ENCODE measurements at regions of chr9 and their contacts with region 1.

Region 1: DNA sequence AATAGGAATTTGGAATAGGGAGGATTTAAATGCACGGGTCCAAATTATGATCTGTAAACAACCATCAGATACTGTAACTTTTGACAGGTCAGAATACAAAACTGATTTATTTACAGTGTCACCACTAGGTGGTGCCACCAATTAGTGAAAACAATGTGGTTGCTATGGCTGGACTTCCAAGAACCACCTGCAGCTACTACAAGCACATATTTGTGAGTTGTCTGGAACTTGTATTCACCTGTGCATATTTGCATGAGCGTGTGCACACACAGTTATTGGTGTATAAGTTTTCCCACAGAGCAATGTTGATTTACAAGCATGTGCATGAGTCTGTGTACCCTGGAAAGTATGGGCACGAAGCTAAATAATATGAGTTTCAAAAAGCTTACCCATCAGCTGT is 3.0 kb upstream of the HRCT1 start:
- DNase-seq: no peak
- H3K4me3 ChIP-seq: no peak overlapping the region
- H3K27me3 ChIP-seq: peaks cover 2% of the 10 kb centered on the region; the same call in 1 of the 2 replicates
- CTCF ChIP-seq: peak; percentile 52

Region 2: DNA sequence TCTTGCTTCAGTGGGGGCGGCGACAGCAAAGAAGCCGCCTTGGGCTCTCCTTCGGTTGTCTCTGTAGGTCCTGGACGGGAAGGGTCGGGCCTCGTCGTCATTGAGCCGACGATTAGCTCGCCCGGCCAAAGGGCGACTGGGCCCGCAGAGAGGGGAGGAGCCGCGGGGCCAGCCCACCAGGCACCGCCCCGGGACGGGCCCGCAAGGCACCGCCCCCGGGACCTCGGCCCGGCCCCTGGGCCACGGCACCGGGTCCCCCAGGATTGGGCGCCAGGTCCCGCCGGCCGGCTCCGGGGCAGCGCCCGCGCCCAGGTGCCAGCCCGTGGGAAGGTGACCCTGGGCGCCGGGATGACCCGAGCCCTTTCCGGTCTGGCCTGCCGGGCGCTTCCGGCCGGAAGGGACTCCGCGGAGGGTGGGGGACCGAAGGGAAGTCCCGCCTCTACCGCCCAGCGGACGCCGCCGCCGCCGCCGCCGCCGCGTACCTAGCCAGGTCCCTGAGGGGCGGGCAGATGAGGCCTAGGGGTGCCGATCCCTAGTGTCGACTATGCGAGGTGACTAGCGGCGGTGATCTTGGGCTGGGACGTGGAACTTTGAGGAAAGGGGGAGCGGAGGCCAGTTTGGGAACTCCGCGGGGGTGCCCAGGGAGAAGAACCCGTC is 154.1 kb before region 1 on chr9 and contains the starts of genes GBA2 and RGP1:
- CTCF ChIA-PET with region 1: no interaction called
- POLR2A ChIA-PET with region 1: no interaction called
- DNase-seq: no peak
- H3K4me3 ChIP-seq: peak within 1 kb of the TSS; percentile 65
- H3K27me3 ChIP-seq: no peaks in the 10 kb centered on the region
- CTCF ChIP-seq: no peak
- polyA plus RNA-seq, gene GBA2: 30.3 and 44.1 TPM in 2 replicates
- polyA plus RNA-seq, gene RGP1: 17.4 and 19.7 TPM in 2 replicates

Region 3: DNA sequence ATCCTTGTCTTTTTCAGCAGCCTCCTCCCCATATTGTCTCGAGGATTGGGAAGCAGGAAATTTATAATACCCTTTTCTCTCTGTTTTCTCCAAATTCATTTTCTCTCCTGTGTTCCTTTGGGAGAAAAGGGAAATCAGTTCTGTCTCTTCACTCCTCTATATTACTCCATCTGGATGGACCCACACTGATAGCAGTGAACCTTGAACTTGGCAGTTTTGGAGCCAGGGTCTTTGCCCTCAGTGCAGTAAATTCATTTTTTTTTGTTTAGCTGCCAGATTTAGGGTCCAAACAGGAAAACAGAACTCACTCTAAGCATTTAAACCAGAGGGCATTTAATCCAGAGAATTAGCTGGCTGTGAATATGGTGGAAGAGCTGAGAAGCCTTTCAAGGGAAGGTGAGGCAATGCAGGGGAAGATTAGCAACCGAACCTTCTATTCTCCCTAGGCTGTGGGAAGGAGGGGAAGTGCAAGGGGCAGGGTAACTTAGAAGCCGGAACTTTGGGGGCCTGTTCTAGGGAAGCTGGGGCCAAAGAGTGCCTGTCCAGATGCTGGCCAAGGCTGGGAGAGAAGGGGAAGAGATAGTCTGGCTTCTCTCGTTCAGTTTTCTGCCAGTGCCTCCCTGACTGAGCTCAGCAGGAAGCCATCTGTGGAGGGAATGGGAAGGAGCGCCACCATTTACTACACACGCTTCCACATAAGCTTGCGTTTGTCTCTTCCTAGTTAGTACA is 128.0 kb before region 1 on chr9:
- CTCF ChIA-PET with region 1: no interaction called
- POLR2A ChIA-PET with region 1: no interaction called
- DNase-seq: no peak
- H3K4me3 ChIP-seq: no peak overlapping the region
- H3K27me3 ChIP-seq: peaks cover 20% of the 10 kb centered on the region
- CTCF ChIP-seq: no peak

Region 4: DNA sequence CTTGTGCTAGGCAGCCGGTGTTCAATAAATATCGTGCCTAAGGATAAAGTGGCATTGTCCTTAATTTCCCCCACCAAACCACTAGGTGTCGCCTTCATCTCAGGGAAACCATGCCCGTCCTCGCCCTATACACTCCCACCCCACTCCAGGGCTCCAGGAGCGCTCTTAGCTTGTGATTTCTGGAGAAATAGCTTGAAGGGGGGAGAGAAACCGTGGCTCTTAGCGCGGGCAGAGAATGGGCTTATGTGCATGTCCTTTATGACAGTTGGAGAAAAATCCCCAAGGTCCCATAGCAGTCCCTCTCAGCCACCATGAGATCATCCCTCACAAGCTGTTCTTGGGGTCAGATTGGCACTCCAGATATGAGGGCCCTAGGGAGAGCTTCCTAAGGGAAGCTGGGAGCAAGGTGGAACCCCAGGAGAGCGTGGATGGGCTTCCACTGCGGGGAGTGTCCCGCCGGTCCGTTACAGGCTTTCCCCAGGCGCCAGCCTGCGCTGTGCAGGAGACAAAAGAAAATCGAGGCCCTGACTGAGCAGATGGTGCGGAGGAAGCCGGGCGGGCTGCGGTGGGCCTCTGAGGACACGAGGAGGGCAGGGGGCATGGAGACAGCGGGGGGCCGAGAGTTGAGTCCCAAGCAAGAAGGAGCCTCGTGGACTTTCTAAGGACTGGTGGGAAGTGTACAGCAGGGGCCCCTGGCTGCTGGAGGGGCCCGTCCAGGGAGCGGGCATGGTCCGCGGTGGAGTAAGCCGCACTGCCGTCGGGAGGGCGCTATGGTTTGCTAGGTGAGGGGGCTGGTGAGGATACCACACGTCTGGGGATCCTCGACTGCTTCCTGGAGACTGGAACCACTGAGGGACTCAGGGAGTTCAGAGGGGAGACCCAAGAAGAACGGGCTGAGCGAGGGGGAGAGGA is 112.4 kb before region 1 on chr9:
- CTCF ChIA-PET with region 1: interaction called, 10 read pairs
- POLR2A ChIA-PET with region 1: no interaction called
- DNase-seq: peak; percentile 18
- H3K4me3 ChIP-seq: peak overlapping the region; percentile 61
- H3K27me3 ChIP-seq: peaks cover 2% of the 10 kb centered on the region; the same call in 1 of the 2 replicates
- CTCF ChIP-seq: peak; percentile 85

Region 5: DNA sequence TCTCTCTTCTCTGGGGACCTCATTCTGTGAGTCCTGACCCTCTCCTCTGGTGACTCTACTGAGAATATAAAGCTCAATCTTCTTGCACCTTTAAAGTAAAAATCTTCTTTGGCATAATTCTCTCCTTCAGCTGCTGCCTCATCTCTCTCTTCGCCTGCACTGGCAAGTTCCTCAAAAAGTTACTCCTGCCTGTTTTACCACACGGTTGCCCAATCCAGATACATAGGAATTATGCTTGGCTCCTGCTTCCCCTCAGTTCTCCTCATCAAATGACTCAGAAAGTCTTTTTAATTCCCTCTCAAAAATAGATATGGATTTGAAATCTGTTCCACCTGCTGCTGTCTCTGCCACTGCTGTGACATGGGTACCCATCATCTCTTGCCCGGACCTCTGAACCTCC is 11.4 kb before region 1 on chr9:
- CTCF ChIA-PET with region 1: interaction called, 38 read pairs
- POLR2A ChIA-PET with region 1: interaction called, 3 read pairs
- DNase-seq: no peak
- H3K4me3 ChIP-seq: no peak overlapping the region
- H3K27me3 ChIP-seq: peaks cover 10% of the 10 kb centered on the region
- CTCF ChIP-seq: no peak

Region 6: GRCh38 chr9:35923927-35924763 is 21.1 kb after region 1 on chr9:
- CTCF ChIA-PET with region 1: interaction called, 11 read pairs
- POLR2A ChIA-PET with region 1: interaction called, 3 read pairs
- DNase-seq: peak; percentile 82
- H3K4me3 ChIP-seq: no peak overlapping the region
- H3K27me3 ChIP-seq: no peaks in the 10 kb centered on the region
- CTCF ChIP-seq: no peak

Region 7: DNA sequence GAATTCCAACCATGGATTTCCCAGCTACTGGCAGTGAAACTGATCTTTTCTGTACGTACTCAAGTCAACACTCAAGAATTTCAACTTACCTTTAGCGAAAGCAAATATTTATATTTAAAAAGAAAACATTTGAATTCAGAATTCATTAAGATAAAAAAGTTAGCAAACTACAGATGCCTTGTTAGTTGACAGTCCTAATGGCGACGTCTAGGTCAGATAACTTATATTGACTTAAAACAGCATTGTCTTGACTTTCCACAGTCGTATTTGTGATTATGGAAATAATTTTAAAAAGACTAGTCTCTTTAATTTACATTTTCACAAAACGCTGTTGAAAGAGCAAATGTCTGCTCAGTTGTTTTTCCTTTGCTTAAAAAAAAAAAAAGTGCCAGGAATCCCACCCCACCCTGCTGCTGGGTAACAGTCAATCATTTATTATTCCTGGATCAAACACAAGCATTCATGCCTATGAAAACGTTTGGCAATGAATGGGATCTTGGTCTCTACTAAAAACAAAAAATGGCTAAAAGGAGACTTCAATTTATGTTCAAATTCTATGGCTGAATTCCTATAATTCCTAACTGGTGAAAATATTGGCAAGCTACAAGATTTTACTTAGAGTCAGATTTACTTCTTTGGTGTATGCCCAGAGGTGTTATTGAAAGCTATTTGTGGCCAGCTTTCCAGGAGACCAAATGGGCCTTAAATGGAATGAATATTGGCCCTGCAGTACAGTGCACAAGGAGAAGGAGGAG is 32.9 kb after region 1 on chr9:
- CTCF ChIA-PET with region 1: interaction called, 170 read pairs
- POLR2A ChIA-PET with region 1: no interaction called
- DNase-seq: peak; percentile 64
- H3K4me3 ChIP-seq: no peak overlapping the region
- H3K27me3 ChIP-seq: no peaks in the 10 kb centered on the region
- CTCF ChIP-seq: no peak

Region 8: DNA sequence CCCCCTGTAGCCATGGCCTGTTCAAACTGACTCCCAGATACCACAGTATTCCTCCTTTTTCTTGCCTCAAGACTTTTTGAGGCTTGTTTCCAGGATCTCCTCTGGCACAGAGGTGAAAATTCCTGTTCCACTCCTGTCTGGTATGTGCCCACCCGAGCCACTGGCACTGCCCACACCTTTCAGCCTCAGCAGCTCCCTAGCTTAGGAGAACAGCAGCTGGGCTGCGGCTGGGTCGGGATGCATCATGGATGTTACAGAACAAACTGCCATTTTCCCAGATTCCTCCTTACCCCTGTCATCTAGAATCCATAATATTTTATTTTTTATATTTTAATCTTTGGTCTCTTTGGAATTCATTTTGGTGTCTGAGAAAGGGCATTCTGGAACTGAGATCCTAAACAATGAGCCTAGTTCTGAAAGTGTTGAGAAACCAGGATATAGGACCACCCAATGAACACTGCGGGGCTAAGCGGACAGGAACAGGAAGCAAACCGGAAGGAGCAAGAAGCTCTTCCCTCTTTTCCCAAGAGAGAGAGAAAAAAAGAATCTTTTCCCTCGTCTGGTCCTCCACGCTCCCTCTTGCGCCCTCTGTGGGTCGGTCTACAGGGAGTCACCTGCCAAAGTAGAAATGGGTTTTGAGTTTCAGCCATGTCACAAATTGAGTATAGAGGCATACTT is 42.4 kb after region 1 on chr9:
- CTCF ChIA-PET with region 1: interaction called, 170 read pairs
- POLR2A ChIA-PET with region 1: no interaction called
- DNase-seq: peak; percentile 26
- H3K4me3 ChIP-seq: no peak overlapping the region
- H3K27me3 ChIP-seq: no peaks in the 10 kb centered on the region
- CTCF ChIP-seq: peak; percentile 92